ENCODE measurements at regions of chr15 and their contacts with region 1.

Region 1: GRCh38 chr15:77543159-77543882 is 89.4 kb downstream of the LINGO1 start:
- DNase-seq: no peak
- H3K4me3 ChIP-seq: peak overlapping the region; percentile 27
- H3K27me3 ChIP-seq: no peaks in the 10 kb centered on the region
- CTCF ChIP-seq: peak; percentile 98

Region 2: GRCh38 chr15:77024271-77025082 is 518.8 kb before region 1 on chr15:
- CTCF ChIA-PET with region 1: interaction called, 25 read pairs
- POLR2A ChIA-PET with region 1: no interaction called
- DNase-seq: no peak
- H3K4me3 ChIP-seq: no peak overlapping the region
- H3K27me3 ChIP-seq: no peaks in the 10 kb centered on the region
- CTCF ChIP-seq: peak; percentile 96

Region 3: DNA sequence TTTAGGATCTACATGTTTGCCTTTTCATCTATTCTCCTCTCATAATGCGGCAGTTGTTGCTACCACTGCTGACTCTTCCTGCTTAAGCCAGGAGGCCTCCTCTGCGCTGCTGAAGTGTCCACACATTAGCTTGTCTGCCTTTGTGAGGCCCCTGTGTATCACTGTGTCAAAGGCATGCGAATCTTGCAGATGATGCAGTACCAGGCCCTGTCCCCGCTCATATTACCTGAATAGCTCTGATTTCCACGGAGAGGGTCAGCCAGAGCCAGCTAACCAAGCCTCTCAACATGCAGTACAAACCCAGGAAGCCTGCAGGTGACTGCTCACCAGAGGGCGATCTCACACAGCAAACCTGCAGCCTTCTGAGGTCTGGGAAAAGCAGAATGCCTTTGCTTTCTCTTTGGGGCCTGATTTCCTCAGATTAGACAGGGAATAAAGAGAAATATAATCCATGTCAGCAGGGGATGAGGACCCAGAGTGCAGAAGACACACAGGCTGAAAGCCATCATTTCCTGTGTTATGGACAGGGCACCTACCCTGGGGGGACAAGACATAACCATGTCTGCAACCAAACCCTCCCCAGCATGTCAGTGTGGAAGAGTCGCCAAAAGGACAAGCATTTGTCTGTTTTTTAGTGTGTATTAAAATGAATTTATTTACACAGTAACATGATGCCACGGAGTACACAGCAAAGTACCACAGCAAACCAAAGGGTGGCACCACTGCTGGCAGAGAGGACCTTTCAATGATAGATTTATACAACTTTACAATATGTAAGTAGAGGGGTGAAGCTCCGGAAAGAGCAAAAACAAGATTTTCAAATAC is 435.6 kb before region 1 on chr15:
- CTCF ChIA-PET with region 1: interaction called, 53 read pairs
- POLR2A ChIA-PET with region 1: no interaction called
- DNase-seq: no peak
- H3K4me3 ChIP-seq: no peak overlapping the region
- H3K27me3 ChIP-seq: no peaks in the 10 kb centered on the region
- CTCF ChIP-seq: peak; percentile 78

Region 4: DNA sequence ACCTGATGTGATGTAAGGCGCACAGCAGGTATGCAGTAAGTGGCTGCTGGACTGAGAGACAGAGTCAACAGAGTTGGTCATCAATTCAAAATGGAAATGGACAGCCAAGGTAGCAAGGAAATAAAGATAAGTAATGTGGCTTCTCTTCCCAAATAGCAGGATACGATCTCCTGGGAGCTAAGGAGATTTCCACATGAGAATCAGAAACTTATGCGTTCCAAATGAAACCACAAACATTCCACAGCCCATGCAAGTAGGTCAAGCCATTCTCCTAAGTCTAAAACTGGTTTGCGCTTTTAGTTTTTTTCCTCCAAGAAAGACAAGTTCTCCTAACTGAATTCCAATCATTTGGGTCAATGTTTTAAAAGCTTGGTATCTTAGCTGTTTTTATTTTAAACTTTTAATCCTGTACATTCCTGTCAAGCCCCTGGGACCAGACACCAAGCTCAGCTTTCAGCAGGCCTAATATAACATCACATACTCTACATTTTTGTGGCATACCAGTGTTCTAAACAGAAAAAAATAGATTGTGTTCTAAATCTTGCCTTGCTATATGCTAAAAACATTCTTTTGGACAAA is 398.7 kb before region 1 on chr15:
- CTCF ChIA-PET with region 1: interaction called, 10 read pairs
- POLR2A ChIA-PET with region 1: interaction called, 3 read pairs
- DNase-seq: peak; percentile 94
- H3K4me3 ChIP-seq: no peak overlapping the region
- H3K27me3 ChIP-seq: no peaks in the 10 kb centered on the region
- CTCF ChIP-seq: no peak

Region 5: DNA sequence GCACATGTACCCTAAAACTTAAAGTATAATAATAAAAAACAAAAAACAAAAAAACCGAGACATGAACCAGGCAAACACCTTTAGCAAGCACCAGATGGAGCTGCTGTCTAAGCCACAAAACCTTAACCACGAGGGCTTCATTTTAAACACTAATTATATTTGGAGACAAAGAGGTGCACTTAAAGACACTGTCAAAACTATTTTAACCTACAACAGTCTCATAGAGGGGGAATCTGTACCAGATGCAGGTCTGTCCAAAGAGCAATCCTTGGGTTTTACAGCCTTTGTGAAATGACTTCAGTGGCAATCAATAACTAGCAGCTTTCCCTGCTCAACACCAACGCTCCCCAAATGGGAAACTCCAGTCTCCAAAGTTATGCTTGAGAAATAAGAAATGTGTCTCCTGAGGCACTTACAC is 356.7 kb before region 1 on chr15:
- CTCF ChIA-PET with region 1: interaction called, 35 read pairs
- POLR2A ChIA-PET with region 1: no interaction called
- DNase-seq: no peak
- H3K4me3 ChIP-seq: no peak overlapping the region
- H3K27me3 ChIP-seq: no peaks in the 10 kb centered on the region
- CTCF ChIP-seq: peak; percentile 52

Region 6: GRCh38 chr15:77496710-77497103 is 46.6 kb before region 1 on chr15:
- CTCF ChIA-PET with region 1: interaction called, 71 read pairs
- POLR2A ChIA-PET with region 1: no interaction called
- DNase-seq: peak; percentile 94
- H3K4me3 ChIP-seq: no peak overlapping the region
- H3K27me3 ChIP-seq: no peaks in the 10 kb centered on the region
- CTCF ChIP-seq: peak; percentile 98

Region 7: GRCh38 chr15:77526791-77527778 is 16.2 kb before region 1 on chr15:
- CTCF ChIA-PET with region 1: interaction called, 13 read pairs
- POLR2A ChIA-PET with region 1: no interaction called
- DNase-seq: no peak
- H3K4me3 ChIP-seq: no peak overlapping the region
- H3K27me3 ChIP-seq: no peaks in the 10 kb centered on the region; the same call in none of the 2 replicates
- CTCF ChIP-seq: no peak

Region 8: GRCh38 chr15:77572186-77572585 is 28.9 kb after region 1 on chr15:
- CTCF ChIA-PET with region 1: no interaction called
- POLR2A ChIA-PET with region 1: no interaction called
- DNase-seq: no peak
- H3K4me3 ChIP-seq: no peak overlapping the region
- H3K27me3 ChIP-seq: peaks cover 10% of the 10 kb centered on the region
- CTCF ChIP-seq: no peak

Region 9: DNA sequence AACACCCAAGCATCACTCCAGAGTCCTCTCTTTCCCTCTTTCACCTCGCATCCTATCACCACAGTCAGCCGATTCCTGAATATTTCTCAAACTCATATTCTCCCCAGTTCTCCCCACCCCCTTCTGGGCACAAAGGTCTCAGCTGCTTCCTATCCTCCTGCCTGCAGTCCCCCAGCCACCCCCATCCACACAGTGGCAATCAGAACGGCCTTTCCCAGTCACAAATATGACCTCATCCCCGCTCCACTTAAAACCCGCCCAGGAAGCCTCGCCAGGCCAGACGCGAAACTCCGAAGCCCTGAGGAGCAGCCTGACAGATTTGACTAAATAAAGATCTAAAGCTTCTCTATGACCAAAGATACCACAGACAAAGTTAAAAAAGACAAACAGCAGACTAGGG is 139.2 kb after region 1 on chr15:
- CTCF ChIA-PET with region 1: no interaction called
- POLR2A ChIA-PET with region 1: no interaction called
- DNase-seq: no peak
- H3K4me3 ChIP-seq: no peak overlapping the region
- H3K27me3 ChIP-seq: peaks cover 5% of the 10 kb centered on the region
- CTCF ChIP-seq: no peak